PC-3 (cell line): ENCODE measurements at regions of chr11 and their contacts with region 1.

Region 1: DNA sequence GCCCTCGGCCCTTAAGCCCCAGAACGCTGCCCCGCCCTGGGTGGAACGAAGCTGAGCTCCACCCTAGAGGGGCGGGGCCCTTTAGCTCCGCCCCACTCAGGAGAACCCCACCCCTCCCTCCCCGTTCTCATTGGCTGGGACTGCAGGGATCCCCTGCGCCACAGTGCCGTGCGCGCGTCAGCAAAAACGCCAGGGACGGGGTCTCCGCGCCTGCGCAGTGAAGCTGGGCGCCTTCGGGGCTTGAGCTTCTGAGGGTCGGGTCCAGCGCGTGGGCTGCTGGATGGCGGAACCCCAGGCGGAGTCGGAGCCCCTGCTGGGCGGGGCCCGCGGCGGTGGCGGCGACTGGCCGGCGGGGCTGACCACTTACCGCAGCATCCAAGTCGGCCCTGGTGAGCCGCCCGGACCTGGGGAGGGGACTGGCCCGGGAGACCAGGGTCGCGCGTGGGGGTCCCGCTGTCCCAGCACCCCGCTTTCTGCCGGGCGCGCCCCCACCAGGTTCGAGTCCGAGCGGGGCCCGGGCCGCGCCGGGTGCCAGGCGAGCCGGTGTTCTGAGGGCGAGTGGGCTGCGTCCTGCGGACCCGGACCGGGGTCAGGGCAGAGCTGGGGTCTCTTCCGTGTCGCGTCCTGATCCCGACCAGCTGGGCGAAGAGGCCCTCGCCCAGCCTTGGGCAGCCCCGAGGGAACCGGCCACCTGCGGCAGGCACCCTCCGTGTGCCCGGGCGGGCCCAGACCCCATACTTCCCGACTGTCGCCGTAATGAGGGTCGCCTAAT is at the start of gene TPCN2:
- DNase-seq: peak; percentile 99
- ATAC-seq: peak; percentile 91
- H3K4me3 ChIP-seq: peak within 1 kb of the TSS; percentile 93
- H3K27ac ChIP-seq: peak within 1 kb of the TSS; percentile 31
- H3K4me1 ChIP-seq: peaks cover 23% of the 10 kb centered on the region
- H3K27me3 ChIP-seq: no peaks in the 10 kb centered on the region
- CTCF ChIP-seq: no peak
- total RNA-seq, gene TPCN2: 13.0 and 14.5 TPM in 2 replicates

Region 2: DNA sequence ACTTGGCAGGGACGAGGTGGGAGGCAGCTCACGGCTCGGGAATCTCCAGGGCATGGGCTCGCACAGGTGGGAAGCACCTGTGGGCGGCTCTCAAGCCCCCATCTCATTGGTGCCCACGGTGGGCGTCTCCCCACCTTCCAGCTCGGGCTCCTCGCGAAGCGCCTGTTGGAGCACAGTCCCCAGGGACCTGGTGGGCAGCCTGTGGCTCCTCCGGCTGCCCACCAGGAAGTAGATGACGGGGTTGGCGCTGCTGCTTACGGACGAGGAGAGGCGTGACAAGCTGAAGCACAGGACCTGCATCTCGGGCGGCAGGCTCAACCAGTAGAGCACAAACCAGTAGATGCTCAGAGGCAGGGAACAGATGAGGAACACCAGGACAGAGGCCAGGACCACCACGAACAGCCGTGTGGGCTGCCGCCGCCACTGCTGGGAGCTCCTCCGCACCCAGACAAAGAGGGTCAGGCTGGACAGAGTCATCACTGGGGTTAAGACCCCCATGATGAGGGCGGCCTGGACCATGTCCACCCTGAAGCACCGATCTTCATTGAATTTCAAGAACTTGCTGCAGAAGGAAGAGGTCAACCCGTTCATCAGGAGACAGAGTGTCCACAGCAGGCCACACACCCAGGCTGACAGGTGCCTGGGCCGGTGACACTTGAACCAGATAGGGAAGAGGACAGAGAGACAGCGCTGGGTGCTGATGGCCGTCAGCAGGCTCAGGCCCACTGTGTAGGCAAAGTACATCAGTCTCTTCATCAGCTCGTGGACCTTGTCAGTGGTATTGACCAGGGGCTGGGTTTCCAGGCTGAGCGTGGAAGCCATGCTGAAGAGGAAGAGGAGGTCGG is 68.8 kb before region 1 on chr11:
- CTCF ChIA-PET with region 1: no interaction called
- POLR2A ChIA-PET with region 1: no interaction called
- intact Hi-C with region 1: loop called (anchors 10 kb)
- DNase-seq: no peak
- ATAC-seq: no peak
- H3K4me3 ChIP-seq: no peak overlapping the region
- H3K27ac ChIP-seq: no peak overlapping the region
- H3K4me1 ChIP-seq: no peaks in the 10 kb centered on the region
- H3K27me3 ChIP-seq: peaks cover 5% of the 10 kb centered on the region; the same call in 1 of the 2 replicates
- CTCF ChIP-seq: no peak

Region 3: DNA sequence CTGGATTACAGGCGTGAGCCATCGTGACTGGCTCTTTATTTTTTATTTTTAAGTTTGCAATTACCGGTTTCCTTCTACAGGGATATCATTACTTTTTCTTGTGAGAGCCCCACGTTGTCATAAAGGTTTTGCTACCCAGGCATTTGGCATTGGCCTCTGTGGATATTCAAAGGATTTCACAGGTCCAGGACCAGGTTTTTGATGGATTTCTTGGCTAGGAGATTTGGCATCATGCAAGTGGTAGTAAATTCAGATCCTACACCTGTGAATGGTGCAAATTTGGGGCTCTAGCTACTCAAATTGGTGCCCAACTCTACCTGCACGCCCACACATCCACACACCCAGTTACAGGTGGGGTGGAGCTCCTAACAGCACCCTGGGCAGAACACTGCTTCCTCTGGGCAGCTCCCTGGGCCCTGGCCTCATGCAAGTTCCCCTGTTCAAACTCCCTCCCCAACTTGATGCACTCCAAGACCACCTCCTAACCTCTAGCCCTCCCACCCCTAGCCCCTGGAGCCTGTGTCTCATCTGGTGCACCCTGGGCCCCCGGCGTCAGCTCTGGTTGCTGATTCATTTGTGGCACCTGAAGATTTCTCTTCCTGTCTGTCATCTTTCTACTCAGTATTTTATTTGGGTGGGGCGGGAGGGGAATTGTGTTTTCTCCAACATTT is 58.8 kb before region 1 on chr11:
- CTCF ChIA-PET with region 1: no interaction called
- POLR2A ChIA-PET with region 1: interaction called, 12 read pairs
- intact Hi-C with region 1: loop called (anchors 10 kb)
- DNase-seq: no peak
- ATAC-seq: no peak
- H3K4me3 ChIP-seq: no peak overlapping the region
- H3K27ac ChIP-seq: no peak overlapping the region
- H3K4me1 ChIP-seq: no peaks in the 10 kb centered on the region
- H3K27me3 ChIP-seq: peaks cover 22% of the 10 kb centered on the region
- CTCF ChIP-seq: no peak

Region 4: DNA sequence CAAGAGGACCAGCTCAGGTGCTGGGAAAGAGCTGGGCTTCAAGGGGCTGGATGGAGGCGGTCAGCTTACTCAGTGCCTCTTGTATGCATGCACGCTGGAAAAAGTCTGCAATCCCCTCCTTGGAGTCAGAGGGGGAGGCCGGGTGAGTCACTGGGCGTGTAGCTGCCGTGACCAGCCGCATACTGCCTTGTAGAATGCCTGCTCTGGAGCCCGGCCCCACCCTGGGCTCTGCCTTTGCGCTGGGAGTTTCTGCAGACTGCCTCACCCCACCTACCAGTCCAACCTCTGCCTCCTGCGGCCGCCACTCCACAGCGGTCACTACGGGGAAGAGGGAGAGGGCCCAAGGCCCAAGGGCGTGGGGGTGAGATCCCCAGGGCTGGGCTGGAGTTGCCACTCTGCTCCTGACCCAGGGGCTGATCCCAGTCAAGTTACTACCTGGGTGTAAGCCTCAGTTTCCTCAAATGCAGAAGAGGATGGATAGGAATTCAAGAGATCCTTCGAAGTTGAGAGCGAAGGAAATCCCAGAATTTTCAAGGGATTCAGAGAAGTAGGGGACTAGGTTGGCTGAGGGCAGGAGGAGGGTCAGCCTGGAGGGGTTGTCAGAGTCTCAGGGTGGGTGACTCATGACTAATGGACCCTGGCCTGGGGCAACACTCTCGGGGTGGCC is 40.0 kb before region 1 on chr11:
- CTCF ChIA-PET with region 1: interaction called, 3 read pairs
- POLR2A ChIA-PET with region 1: no interaction called
- intact Hi-C with region 1: loop called (anchors 2 kb)
- DNase-seq: peak; percentile 95
- ATAC-seq: peak; percentile 97
- H3K4me3 ChIP-seq: no peak overlapping the region
- H3K27ac ChIP-seq: peak overlapping the region; percentile 50
- H3K4me1 ChIP-seq: peaks cover 29% of the 10 kb centered on the region
- H3K27me3 ChIP-seq: no peaks in the 10 kb centered on the region
- CTCF ChIP-seq: no peak